A549 (cell line): ENCODE measurements at regions of chr5 and their contacts with region 1.

Region 1: GRCh38 chr5:112551419-112552032 is 132.4 kb upstream of the EPB41L4A start:
- DNase-seq: peak; percentile 56 to 66
- ATAC-seq: peak; percentile 78 to 88
- H3K4me3 ChIP-seq: no peak overlapping the region
- H3K27ac ChIP-seq: no peak overlapping the region
- H3K4me1 ChIP-seq: peaks cover 7% of the 10 kb centered on the region; the same call in 1 of the 3 replicates
- CTCF ChIP-seq: peak; percentile 89
- EP300 ChIP-seq: no peak
- POLR2A ChIP-seq: no peak
- RAD21 ChIP-seq: peak; percentile 87 to 89

Region 2: GRCh38 chr5:112533362-112533761 is 18.2 kb before region 1 on chr5:
- CTCF ChIA-PET with region 1: interaction called, 21 read pairs
- POLR2A ChIA-PET with region 1: no interaction called
- DNase-seq: peak; percentile 40 to 75
- ATAC-seq: peak; percentile 99 to 100
- H3K4me3 ChIP-seq: no peak overlapping the region
- H3K27ac ChIP-seq: no peak overlapping the region
- H3K4me1 ChIP-seq: peaks cover 11% of the 10 kb centered on the region; the same call in 2 of the 3 replicates
- CTCF ChIP-seq: no peak
- EP300 ChIP-seq: no peak
- POLR2A ChIP-seq: no peak
- RAD21 ChIP-seq: no peak

Region 3: DNA sequence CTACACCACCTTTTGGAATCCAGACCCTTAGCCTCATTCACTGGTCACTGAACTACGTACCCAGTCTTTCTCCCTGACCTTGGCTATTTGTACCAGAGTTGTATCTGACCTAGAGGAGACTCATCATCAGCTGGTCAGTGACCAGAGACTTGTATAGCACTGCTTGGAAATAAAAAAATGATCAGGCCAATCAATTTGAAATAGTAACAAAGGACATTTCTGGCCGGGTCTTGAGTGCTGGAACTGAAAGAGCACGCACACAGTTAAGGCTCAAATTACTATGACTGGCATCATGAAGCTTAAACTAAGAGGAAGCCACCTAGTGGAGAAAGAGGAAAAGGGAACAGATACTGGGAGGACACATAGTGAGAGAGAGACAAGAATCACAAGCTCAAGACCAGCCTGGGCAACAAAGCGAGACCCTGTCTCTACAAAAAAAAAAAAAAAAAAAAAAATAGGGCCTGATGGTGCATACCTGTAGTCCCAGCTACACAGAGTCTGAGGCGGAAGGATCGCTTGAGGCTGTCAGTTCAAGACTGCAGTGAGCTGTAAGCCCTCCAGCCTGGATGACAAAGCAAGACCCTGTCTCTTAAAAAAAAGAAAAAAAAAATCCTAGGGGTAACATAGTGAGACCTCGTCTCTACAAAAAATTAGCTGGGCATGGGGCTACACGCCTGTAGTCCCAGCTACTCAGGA is 296.7 kb after region 1 on chr5:
- CTCF ChIA-PET with region 1: interaction called, 16 read pairs
- POLR2A ChIA-PET with region 1: no interaction called
- DNase-seq: peak; percentile 33 to 71
- ATAC-seq: peak; percentile 96 to 99
- H3K4me3 ChIP-seq: no peak overlapping the region
- H3K27ac ChIP-seq: no peak overlapping the region
- H3K4me1 ChIP-seq: no peaks in the 10 kb centered on the region
- CTCF ChIP-seq: peak; percentile 63
- EP300 ChIP-seq: no peak
- POLR2A ChIP-seq: no peak
- RAD21 ChIP-seq: peak; percentile 42 to 54; a peak in 4 of 5 replicates